Right cardiac atrium (tissue), 5 donors: ENCODE measurements at regions of chr18 and their contacts with region 1.

Region 1: GRCh38 chr18:22348521-22349316 is 69.0 kb downstream of the CTAGE1 start:
- DNase-seq: peak; percentile 85 to 95 (median 92)
- ATAC-seq: peak; percentile 81 to 83
- H3K4me3 ChIP-seq: peak overlapping the region; percentile 77
- H3K27ac ChIP-seq: peak overlapping the region; percentile 91
- H3K4me1 ChIP-seq: peaks cover 10% of the 10 kb centered on the region
- H3K27me3 ChIP-seq: no peaks in the 10 kb centered on the region

Region 2: GRCh38 chr18:22169007-22169864 is 179.5 kb before region 1 on chr18 and contains the start of gene GATA6:
- intact Hi-C with region 1: loop called in 3 of 4 experiments (anchors 5 kb)
- DNase-seq: peak; percentile 95 to 98 (median 97)
- ATAC-seq: peak; percentile 87
- H3K4me3 ChIP-seq: peak within 1 kb of the TSS; percentile 66
- H3K27ac ChIP-seq: peak within 1 kb of the TSS; percentile 86
- H3K4me1 ChIP-seq: no peaks in the 10 kb centered on the region
- H3K27me3 ChIP-seq: no peaks in the 10 kb centered on the region
- total RNA-seq, gene GATA6: 63.2 to 85.8 (median 77.9) TPM

Region 3: GRCh38 chr18:22214731-22215528 is 133.8 kb before region 1 on chr18:
- intact Hi-C with region 1: loop called in 1 of 4 experiments (anchors 10 kb)
- DNase-seq: peak in 1 of 3 donors; percentile 53
- ATAC-seq: peak in 1 of 2 donors; percentile 54
- H3K4me3 ChIP-seq: no peak overlapping the region
- H3K27ac ChIP-seq: no peak overlapping the region
- H3K4me1 ChIP-seq: peaks cover 6% of the 10 kb centered on the region
- H3K27me3 ChIP-seq: no peaks in the 10 kb centered on the region

Region 4: GRCh38 chr18:22267697-22268096 is 81.0 kb before region 1 on chr18:
- intact Hi-C with region 1: loop called in 1 of 4 experiments (anchors 5 kb)
- DNase-seq: peak; percentile 79 to 88 (median 87)
- ATAC-seq: peak; percentile 95
- H3K4me3 ChIP-seq: no peak overlapping the region
- H3K27ac ChIP-seq: peak overlapping the region; percentile 94
- H3K4me1 ChIP-seq: peaks cover 4% of the 10 kb centered on the region
- H3K27me3 ChIP-seq: no peaks in the 10 kb centered on the region

Region 5: GRCh38 chr18:22279741-22280452 is 68.8 kb before region 1 on chr18:
- intact Hi-C with region 1: loop called in 1 of 4 experiments (anchors 5 kb)
- DNase-seq: peak in 2 of 3 donors; percentile 54 to 67
- ATAC-seq: peak; percentile 21 to 54
- H3K4me3 ChIP-seq: no peak overlapping the region
- H3K27ac ChIP-seq: peak overlapping the region; percentile 97
- H3K4me1 ChIP-seq: peaks cover 5% of the 10 kb centered on the region
- H3K27me3 ChIP-seq: no peaks in the 10 kb centered on the region

Region 6: DNA sequence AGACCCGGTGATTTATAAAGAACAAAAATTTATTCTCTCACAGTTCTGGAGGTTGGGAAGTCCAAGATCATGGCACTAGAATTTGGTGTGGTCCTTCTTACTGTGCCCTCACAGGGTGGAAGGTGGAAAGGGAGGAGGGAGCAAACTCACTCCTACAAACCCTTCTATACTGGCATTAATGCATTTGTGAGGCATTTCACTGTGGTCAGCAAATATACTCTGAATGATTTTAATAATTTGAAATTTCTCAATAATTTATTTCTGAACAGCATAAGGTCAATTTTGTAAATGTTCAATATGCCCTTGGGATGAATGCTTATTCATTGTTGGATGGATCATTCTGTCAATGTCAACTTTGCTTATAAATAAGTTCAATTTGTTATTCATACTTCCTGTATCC is 58.7 kb before region 1 on chr18:
- intact Hi-C with region 1: no loop called
- DNase-seq: no peak
- ATAC-seq: no peak
- H3K4me3 ChIP-seq: no peak overlapping the region
- H3K27ac ChIP-seq: no peak overlapping the region
- H3K4me1 ChIP-seq: no peaks in the 10 kb centered on the region
- H3K27me3 ChIP-seq: no peaks in the 10 kb centered on the region

Region 7: DNA sequence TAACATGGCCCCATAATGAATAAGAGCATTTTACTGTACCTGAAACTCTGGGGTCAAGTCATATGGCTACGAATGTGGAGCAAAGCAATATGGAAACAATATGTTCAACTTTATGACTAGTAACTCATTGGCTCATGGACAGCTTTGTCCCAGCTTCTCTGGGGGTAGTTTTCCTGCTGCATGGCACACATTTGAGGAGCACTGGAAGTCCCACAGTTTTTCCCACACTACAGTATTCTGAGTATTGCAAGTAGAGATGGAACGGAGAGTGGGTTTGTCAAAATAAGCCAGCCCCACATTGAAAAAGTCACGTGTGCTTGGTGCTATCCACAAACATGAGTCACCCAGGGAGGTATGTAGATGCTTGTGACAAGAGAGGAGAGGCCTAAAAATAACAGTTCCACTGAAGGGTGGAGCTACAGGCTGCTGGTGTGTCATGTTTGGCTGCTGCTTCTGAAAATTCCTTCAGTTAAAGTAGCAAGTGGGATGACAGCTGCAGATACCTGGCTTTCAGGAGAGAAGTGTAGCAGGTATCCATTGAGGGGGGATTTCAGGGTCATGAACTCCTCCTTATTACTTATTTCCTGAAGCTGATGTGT is 117.2 kb after region 1 on chr18:
- intact Hi-C with region 1: loop called in 1 of 4 experiments (anchors 10 kb)
- DNase-seq: peak in 1 of 3 donors; percentile 52
- ATAC-seq: peak; percentile 86 to 88
- H3K4me3 ChIP-seq: no peak overlapping the region
- H3K27ac ChIP-seq: peak overlapping the region; percentile 85
- H3K4me1 ChIP-seq: peaks cover 10% of the 10 kb centered on the region
- H3K27me3 ChIP-seq: no peaks in the 10 kb centered on the region